ENCODE measurements at regions of chr19 and their contacts with region 1.

Region 1: DNA sequence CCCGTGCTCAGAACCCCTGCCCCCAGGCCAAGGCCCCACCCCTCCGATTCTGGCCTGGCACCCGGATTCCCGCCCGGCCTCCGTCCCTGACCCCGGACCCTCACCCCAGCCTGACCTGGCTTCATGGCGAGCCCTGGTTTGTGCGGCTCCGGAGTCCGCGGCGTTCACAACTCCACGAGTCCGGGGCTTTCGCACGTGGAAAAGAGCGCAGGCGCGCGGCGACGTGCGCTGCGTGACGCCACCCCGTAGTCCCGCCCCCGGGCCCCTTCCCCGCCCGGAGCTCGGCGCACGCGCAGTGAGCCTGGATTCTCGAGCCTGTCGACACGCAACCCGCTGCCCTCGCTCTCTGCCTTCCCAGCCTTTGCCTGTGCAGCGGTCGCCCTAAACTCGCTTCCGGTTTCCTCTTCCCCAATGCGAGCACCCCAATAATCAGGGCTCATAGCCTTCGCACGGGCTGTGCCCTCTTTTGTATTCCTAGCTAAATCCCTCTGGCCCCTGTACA is at the start of gene FBL:
- DNase-seq: peak; percentile 87
- H3K4me3 ChIP-seq: peak within 1 kb of the TSS; percentile 67 to 86 (median 76)
- H3K27ac ChIP-seq: peak within 1 kb of the TSS; percentile 76
- H3K4me1 ChIP-seq: peaks cover 36% of the 10 kb centered on the region
- H3K27me3 ChIP-seq: no peaks in the 10 kb centered on the region
- CTCF ChIP-seq: no peak
- total RNA-seq, gene FBL: 72.2 to 261 TPM

Region 2: GRCh38 chr19:39539519-39540332 is 306.5 kb before region 1 on chr19 and contains the start of gene EID2:
- CTCF ChIA-PET with region 1: no interaction called
- dilution Hi-C with region 1: no loop called
- in situ Hi-C with region 1: no loop called
- intact Hi-C with region 1: loop called (anchors 10 kb)
- DNase-seq: peak; percentile 84
- H3K4me3 ChIP-seq: peak within 1 kb of the TSS; percentile 73 to 90 (median 88)
- H3K27ac ChIP-seq: peak within 1 kb of the TSS; percentile 69
- H3K4me1 ChIP-seq: peaks cover 36% of the 10 kb centered on the region
- H3K27me3 ChIP-seq: no peaks in the 10 kb centered on the region
- CTCF ChIP-seq: peak; percentile 66 to 85
- total RNA-seq, gene EID2: 9.7 to 15.0 TPM

Region 3: GRCh38 chr19:39679056-39679790 is 167.0 kb before region 1 on chr19:
- CTCF ChIA-PET with region 1: no interaction called
- dilution Hi-C with region 1: no loop called
- in situ Hi-C with region 1: no loop called
- intact Hi-C with region 1: loop called (anchors 5 kb)
- DNase-seq: no peak
- H3K4me3 ChIP-seq: no peak overlapping the region
- H3K27ac ChIP-seq: no peak overlapping the region
- H3K4me1 ChIP-seq: no peaks in the 10 kb centered on the region
- H3K27me3 ChIP-seq: no peaks in the 10 kb centered on the region
- CTCF ChIP-seq: no peak

Region 4: GRCh38 chr19:39792999-39793546 is 53.2 kb before region 1 on chr19:
- CTCF ChIA-PET with region 1: interaction called, 4 read pairs
- dilution Hi-C with region 1: no loop called
- in situ Hi-C with region 1: no loop called
- intact Hi-C with region 1: loop called (anchors 1 kb)
- DNase-seq: peak; percentile 58
- H3K4me3 ChIP-seq: peak overlapping the region; percentile 18 to 51 (median 39)
- H3K27ac ChIP-seq: no peak overlapping the region
- H3K4me1 ChIP-seq: no peaks in the 10 kb centered on the region
- H3K27me3 ChIP-seq: peaks cover 5% of the 10 kb centered on the region
- CTCF ChIP-seq: peak; percentile 79 to 98

Region 5: DNA sequence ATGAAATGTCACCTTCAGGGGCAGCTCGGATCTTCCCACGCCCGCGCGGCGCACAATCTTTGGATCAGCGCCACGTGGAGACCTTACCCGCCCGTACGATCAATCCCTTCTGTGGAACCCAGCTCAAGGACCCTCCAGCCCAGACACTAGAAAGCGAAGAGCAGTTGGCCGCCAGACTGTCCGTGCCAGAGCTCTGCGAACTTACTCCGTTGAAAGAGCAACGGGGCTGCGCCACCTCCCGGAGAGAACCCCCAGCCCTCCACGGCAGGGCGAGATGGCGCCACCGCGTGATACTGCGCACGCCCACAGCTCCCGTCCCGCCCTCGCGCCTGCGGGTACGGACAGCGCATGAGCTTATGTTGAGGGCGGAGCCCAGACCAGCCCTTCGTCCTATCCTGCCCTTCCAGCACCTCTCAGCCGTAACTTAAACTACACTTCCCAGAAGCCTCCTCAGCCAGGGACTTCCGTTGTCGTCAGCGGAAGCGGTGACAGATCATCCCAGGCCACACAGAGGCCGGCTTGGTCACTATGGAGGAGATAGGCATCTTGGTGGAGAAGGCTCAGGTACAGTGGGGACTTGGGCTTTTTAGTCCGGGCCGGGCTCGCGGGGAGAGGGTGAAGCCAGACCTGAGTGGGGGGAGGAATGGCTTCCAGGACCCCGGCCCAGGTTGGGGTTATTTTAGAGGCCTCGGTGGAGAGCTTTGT is 124.6 kb after region 1 on chr19 and contains the start of gene PSMC4:
- CTCF ChIA-PET with region 1: interaction called, 5 read pairs
- dilution Hi-C with region 1: loop called (anchors 5 kb)
- in situ Hi-C with region 1: no loop called
- intact Hi-C with region 1: no loop called
- DNase-seq: peak; percentile 99
- H3K4me3 ChIP-seq: peak within 1 kb of the TSS; percentile 76 to 89 (median 82)
- H3K27ac ChIP-seq: peak within 1 kb of the TSS; percentile 83
- H3K4me1 ChIP-seq: peaks cover 13% of the 10 kb centered on the region
- H3K27me3 ChIP-seq: no peaks in the 10 kb centered on the region
- CTCF ChIP-seq: peak; percentile 60 to 87
- total RNA-seq, gene PSMC4: 85.9 to 100 TPM

Region 6: DNA sequence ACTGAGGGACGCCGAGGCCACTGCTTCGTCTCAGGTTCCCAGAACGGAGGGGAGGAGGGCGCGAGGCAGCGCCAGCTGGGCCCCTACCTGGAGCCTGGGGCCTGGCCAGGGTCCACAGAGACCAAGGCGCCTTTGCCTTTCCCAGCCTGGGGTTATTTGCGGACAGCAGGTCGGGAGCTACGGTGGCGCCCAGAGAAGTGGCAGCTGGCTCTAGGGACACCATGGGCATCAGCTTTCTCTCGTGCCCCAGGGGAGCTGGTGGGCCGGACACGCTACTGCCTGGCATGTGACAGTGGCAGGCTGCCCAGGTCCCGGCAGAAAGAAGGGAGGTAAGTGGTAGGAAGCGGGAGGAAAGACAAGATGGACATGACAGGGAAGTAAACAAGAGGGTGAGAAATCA is 419.9 kb after region 1 on chr19:
- CTCF ChIA-PET with region 1: no interaction called
- dilution Hi-C with region 1: loop called (anchors 10 kb)
- in situ Hi-C with region 1: no loop called
- intact Hi-C with region 1: no loop called
- DNase-seq: no peak
- H3K4me3 ChIP-seq: no peak overlapping the region
- H3K27ac ChIP-seq: no peak overlapping the region
- H3K4me1 ChIP-seq: no peaks in the 10 kb centered on the region
- H3K27me3 ChIP-seq: no peaks in the 10 kb centered on the region
- CTCF ChIP-seq: no peak

Measured in mammary epithelial cell (primary cell).